GM12878 (cell line): ENCODE measurements at regions of chr17 and their contacts with region 1.

Region 1: GRCh38 chr17:37844158-37844976 is 79.8 kb upstream of the TBC1D3K start:
- DNase-seq: no peak
- ATAC-seq: peak; percentile 84
- H3K4me3 ChIP-seq: no peak overlapping the region
- H3K27ac ChIP-seq: no peak overlapping the region
- H3K4me1 ChIP-seq: peaks cover 28% of the 10 kb centered on the region
- H3K27me3 ChIP-seq: no peaks in the 10 kb centered on the region
- CTCF ChIP-seq: peak; percentile 69 to 90 (median 88)
- EP300 ChIP-seq: no peak
- POLR2A ChIP-seq: 0 out of 2 replicates have a peak, but pooled peaks have one; percentile 26
- RAD21 ChIP-seq: peak; percentile 85

Region 2: GRCh38 chr17:37824534-37825485 is 19.6 kb before region 1 on chr17:
- CTCF ChIA-PET with region 1: interaction called, 13 read pairs
- POLR2A ChIA-PET with region 1: interaction called, 3 read pairs
- RAD21 ChIA-PET with region 1: interaction called, 5 read pairs
- SMC1A ChIA-PET with region 1: interaction called, 48 read pairs
- in situ Hi-C with region 1: no loop called
- intact Hi-C with region 1: no loop called
- DNase-seq: no peak
- ATAC-seq: no peak; the same call in 1 of the 3 replicates
- H3K4me3 ChIP-seq: no peak overlapping the region
- H3K27ac ChIP-seq: no peak overlapping the region
- H3K4me1 ChIP-seq: peaks cover 52% of the 10 kb centered on the region
- H3K27me3 ChIP-seq: no peaks in the 10 kb centered on the region
- CTCF ChIP-seq: no peak
- EP300 ChIP-seq: no peak
- POLR2A ChIP-seq: no peak
- RAD21 ChIP-seq: no peak

Region 3: GRCh38 chr17:37833237-37833859 is 11.0 kb before region 1 on chr17:
- CTCF ChIA-PET with region 1: interaction called, 19 read pairs
- POLR2A ChIA-PET with region 1: no interaction called
- RAD21 ChIA-PET with region 1: interaction called, 10 read pairs
- SMC1A ChIA-PET with region 1: interaction called, 48 read pairs
- in situ Hi-C with region 1: no loop called
- intact Hi-C with region 1: no loop called
- DNase-seq: peak; percentile 76
- ATAC-seq: peak; percentile 81
- H3K4me3 ChIP-seq: no peak overlapping the region
- H3K27ac ChIP-seq: no peak overlapping the region
- H3K4me1 ChIP-seq: peaks cover 40% of the 10 kb centered on the region
- H3K27me3 ChIP-seq: no peaks in the 10 kb centered on the region
- CTCF ChIP-seq: no peak
- EP300 ChIP-seq: 0 out of 4 replicates have a peak, but pooled peaks of 1 of the 2 experiments have one; percentile 18
- POLR2A ChIP-seq: no peak
- RAD21 ChIP-seq: no peak

Region 4: DNA sequence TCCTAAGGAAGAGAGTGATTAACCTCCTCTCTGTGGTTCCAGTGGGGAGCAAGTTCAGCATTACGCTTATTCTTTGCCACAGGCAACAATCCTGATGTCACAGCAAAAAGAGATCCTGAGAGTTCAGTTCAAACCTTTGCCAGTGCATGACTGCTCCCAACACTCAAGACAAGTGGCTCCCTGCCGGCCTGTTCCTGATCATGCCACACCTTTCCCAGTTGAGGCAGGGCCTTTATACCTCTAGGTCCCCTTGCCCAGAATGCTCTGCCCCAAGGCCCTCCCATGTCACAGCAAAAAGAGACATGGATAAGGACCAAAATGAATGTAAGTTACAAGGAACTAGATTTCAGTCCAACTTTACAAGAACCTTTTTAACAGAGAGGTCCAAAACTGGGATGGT is 552.9 kb after region 1 on chr17:
- CTCF ChIA-PET with region 1: no interaction called
- POLR2A ChIA-PET with region 1: no interaction called
- RAD21 ChIA-PET with region 1: no interaction called
- SMC1A ChIA-PET with region 1: no interaction called
- in situ Hi-C with region 1: loop called (anchors 25 kb)
- intact Hi-C with region 1: no loop called
- DNase-seq: no peak
- ATAC-seq: no peak
- H3K4me3 ChIP-seq: no peak overlapping the region
- H3K27ac ChIP-seq: no peak overlapping the region
- H3K4me1 ChIP-seq: no peaks in the 10 kb centered on the region
- H3K27me3 ChIP-seq: no peaks in the 10 kb centered on the region
- CTCF ChIP-seq: no peak
- EP300 ChIP-seq: no peak
- POLR2A ChIP-seq: no peak
- RAD21 ChIP-seq: no peak